ENCODE measurements at regions of chr17 and their contacts with region 1.

Region 1: GRCh38 chr17:32783602-32784001 is 93.3 kb downstream of the MYO1D start:
- DNase-seq: no peak
- ATAC-seq: peak; percentile 82
- H3K4me3 ChIP-seq: no peak overlapping the region
- H3K27ac ChIP-seq: no peak overlapping the region
- H3K4me1 ChIP-seq: peaks cover 0 to 3% of the 10 kb centered on the region in 2 donors
- H3K27me3 ChIP-seq: no peaks in the 10 kb centered on the region

Region 2: DNA sequence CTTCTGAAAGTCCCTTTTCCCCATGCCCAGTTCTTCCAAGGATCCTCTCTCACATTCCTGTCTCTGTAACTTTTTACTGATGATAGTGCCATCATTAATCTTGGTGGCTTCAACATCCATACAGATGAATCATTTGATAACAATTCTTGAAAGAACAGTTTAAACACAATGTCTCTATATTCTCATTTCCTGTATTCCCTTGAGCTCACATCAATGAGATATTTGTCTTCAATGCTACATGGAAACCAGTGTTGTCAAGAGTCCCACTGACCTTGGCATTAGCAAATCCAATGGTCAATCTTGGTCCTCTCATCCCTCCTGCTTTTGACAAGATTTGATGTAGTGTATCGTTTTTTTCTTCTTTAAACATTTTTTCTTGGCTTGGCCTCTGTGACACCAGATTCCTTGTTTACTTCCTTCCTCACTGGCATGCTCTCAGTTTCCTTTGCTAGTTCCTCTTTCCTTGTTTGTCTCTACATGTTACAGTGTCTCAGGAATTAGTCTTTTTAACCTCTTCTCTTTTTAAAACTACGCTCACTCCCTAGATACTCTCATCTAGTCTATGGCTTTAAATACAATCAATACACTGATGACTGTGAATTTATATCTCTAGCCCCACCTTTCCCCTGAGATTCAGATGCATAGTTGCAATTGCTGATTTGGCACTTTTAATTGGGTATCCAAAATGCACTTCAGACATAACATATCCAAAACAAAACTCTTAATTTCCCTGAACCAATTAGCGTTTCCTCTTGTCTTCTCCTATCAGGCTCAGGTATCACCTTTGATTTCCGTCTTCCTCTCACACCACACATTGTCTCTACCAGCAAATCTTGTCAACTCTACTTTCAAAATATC is 40.7 kb before region 1 on chr17:
- intact Hi-C with region 1: no loop called
- DNase-seq: no peak
- ATAC-seq: no peak
- H3K4me3 ChIP-seq: no peak overlapping the region
- H3K27ac ChIP-seq: no peak overlapping the region
- H3K4me1 ChIP-seq: no peaks in the 10 kb centered on the region
- H3K27me3 ChIP-seq: no peaks in the 10 kb centered on the region

Region 3: DNA sequence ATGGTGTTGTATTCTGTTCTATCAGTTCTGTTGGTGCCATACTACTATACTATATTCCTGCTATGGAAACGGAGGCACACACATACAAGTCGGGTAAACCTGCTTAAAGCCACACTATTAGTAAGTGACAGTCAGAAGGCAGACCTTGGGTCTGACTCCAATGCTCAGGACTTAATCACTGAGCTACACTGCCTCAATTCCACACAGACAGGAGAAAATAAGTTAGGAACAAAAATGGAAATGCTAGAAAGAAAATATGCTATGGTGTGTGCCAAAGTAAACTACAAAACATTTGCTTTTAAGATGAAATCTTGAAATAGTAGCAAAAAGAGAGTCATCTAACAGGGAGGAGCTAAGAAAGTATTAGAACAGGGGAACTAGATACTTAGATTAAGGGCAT is 45.2 kb after region 1 on chr17:
- intact Hi-C with region 1: no loop called
- DNase-seq: no peak
- ATAC-seq: no peak
- H3K4me3 ChIP-seq: no peak overlapping the region
- H3K27ac ChIP-seq: peak overlapping the region; percentile 82 to 94
- H3K4me1 ChIP-seq: peaks cover 6 to 8% of the 10 kb centered on the region in 2 donors
- H3K27me3 ChIP-seq: no peaks in the 10 kb centered on the region

Region 4: DNA sequence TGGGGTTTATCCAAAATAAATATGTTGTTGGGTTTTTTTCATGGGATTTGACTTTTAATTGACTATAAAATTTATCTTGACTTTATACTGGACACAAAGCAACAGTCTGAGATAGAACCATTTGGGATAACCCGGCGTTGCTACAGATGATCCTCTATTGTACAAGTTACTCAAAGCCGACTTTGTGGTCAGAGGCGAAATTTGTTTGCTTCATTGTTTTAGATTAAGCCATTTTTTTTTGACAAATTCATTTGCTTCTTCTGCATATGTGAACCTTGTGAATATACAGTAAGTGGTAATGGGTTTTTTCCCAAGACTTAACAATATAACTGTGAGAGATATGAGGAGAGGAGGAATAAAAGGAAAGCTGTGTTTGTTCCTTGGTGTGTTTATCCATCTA is 81.5 kb after region 1 on chr17:
- intact Hi-C with region 1: no loop called
- DNase-seq: no peak
- ATAC-seq: no peak
- H3K4me3 ChIP-seq: no peak overlapping the region
- H3K27ac ChIP-seq: no peak overlapping the region
- H3K4me1 ChIP-seq: peaks cover 3 to 22% of the 10 kb centered on the region in 2 donors
- H3K27me3 ChIP-seq: no peaks in the 10 kb centered on the region

Region 5: GRCh38 chr17:32877164-32877764 is 93.7 kb after region 1 on chr17:
- intact Hi-C with region 1: loop called (anchors 2 kb)
- DNase-seq: peak; percentile 95 to 97
- ATAC-seq: peak; percentile 97
- H3K4me3 ChIP-seq: peak overlapping the region; percentile 74 to 97
- H3K27ac ChIP-seq: peak overlapping the region; percentile 71 to 96
- H3K4me1 ChIP-seq: peaks cover 0 to 2% of the 10 kb centered on the region in 2 donors
- H3K27me3 ChIP-seq: no peaks in the 10 kb centered on the region

Region 6: GRCh38 chr17:32909787-32910369 is 126.3 kb after region 1 on chr17:
- intact Hi-C with region 1: loop called (anchors 5 to 10 kb)
- DNase-seq: peak in 1 of 2 donors; percentile 76
- ATAC-seq: peak; percentile 85
- H3K4me3 ChIP-seq: no peak overlapping the region
- H3K27ac ChIP-seq: no peak overlapping the region
- H3K4me1 ChIP-seq: no peaks in the 10 kb centered on the region
- H3K27me3 ChIP-seq: no peaks in the 10 kb centered on the region

Region 7: DNA sequence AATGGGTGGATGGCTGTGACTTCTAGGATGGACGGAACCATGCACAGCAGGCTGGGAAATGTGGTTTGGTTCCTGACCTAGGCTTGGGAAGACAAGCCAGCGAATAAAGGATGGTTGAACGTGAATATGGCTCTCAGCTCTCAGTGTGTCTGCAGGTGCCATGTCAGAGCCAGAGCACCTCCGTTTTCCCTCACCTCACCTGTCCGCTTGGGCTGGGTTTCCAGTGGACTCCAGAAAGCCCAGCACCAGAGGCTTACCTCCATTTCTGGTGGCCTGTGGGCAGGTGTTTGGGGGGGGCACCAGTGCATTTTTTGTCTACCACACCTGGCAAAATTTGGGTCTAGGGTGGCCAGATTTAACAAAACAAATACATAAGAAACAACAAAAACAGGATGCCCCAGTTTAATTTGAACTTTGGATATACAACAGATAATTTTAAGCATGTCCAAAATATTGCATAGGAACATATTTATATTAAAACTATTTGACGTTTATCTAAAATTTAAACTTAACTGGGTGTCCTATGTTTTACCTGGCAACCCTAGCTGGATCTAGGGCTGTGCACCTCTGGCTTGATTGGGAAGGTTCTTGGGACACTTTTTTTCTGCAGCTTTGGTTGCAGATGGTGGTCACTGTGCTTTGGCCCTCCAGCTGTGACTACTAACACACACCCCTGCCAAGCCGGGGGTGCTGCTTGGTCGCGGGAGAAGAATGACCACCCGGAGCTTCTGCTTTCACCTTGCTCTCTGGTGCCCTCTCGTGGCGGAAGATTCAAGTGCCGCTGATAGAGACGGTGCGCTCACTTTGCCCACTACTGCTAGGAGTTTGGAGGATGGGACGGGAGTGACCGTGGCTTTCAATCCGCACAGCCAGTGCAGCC is 214.4 kb after region 1 on chr17:
- intact Hi-C with region 1: loop called in 1 of 2 experiments (anchors 10 kb)
- DNase-seq: peak; percentile 84 to 93
- ATAC-seq: peak; percentile 51
- H3K4me3 ChIP-seq: no peak overlapping the region
- H3K27ac ChIP-seq: no peak overlapping the region
- H3K4me1 ChIP-seq: no peaks in the 10 kb centered on the region
- H3K27me3 ChIP-seq: no peaks in the 10 kb centered on the region

Measured in aorta (tissue), 5 donors.